Activated T-helper 1 cell treated with anti-CD3 and anti-CD28 coated beads, Interleukin-12 subunit alpha, Interleukin-12 subunit beta, Interleukin-2, Interleukin-4 antibody, amounts not matched to agents 30 ng/mL and 10 ng/mL and 1 ng/mL, durations not matched to agents 14 hours and 24 hours and 36 hours (primary cell): ENCODE measurements at regions of chr7 and their contacts with region 1.

Region 1: DNA sequence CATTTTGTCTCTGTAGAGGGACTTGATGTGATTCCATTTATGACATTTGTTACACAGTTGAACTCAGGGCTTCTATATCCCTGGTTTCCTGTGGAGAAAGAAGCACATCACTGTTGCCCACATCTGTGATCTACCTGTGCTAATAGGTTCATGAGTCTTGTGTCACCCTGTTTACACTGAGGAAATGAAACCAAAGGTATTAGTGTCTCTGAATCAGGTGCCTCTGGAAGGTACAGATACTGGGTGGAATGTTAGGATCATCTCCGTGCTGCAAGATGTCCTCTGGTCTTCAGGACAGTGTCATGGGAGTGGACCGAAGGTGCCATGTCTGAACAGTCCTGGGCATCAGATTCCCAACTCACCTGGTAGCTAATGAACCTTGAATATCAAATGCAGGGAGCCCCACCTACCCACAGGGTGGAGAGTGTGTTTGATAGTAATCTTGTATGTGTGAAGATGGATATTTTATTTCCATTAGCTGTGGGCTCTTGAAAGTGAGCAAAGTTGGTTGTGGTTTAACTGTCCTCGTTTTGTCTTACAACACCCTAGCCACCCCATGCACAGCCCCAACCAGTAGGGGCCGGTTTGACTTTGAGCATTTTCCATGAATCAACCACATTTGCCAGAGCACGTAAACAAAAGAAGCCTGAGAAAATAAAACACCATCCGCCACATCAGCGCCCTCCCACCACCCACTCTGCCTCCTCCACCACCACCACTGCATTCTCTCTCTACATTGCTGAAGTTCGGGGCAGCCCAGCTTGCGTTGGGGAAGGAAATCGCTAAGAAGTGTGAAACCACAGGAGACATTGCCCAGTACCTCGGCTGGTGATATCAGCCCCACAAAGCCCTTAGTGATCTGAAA is 40.7 kb downstream of the TARP start:
- DNase-seq: peak; percentile 78
- H3K4me3 Mint-ChIP-seq: peak overlapping the region; percentile 69
- H3K27ac Mint-ChIP-seq: peak overlapping the region; percentile 91
- H3K4me1 Mint-ChIP-seq: peaks cover 73% of the 10 kb centered on the region
- H3K27me3 Mint-ChIP-seq: peaks cover 3% of the 10 kb centered on the region

Region 2: GRCh38 chr7:38178004-38178694 is 54.6 kb before region 1 on chr7 and contains the start of gene STARD3NL:
- intact Hi-C with region 1: loop called (anchors 1 kb)
- DNase-seq: peak; percentile 90
- H3K4me3 Mint-ChIP-seq: peak within 1 kb of the TSS; percentile 94
- H3K27ac Mint-ChIP-seq: peak within 1 kb of the TSS; percentile 87
- H3K4me1 Mint-ChIP-seq: peaks cover 46% of the 10 kb centered on the region
- H3K27me3 Mint-ChIP-seq: no peaks in the 10 kb centered on the region
- total RNA-seq, gene STARD3NL: 28.5 and 31.5 TPM in 2 replicates

Region 3: GRCh38 chr7:38222481-38223096 is 10.1 kb before region 1 on chr7:
- intact Hi-C with region 1: loop called (anchors 1 kb)
- DNase-seq: peak; percentile 25
- H3K4me3 Mint-ChIP-seq: no peak overlapping the region
- H3K27ac Mint-ChIP-seq: no peak overlapping the region
- H3K4me1 Mint-ChIP-seq: peaks cover 35% of the 10 kb centered on the region
- H3K27me3 Mint-ChIP-seq: no peaks in the 10 kb centered on the region

Region 4: DNA sequence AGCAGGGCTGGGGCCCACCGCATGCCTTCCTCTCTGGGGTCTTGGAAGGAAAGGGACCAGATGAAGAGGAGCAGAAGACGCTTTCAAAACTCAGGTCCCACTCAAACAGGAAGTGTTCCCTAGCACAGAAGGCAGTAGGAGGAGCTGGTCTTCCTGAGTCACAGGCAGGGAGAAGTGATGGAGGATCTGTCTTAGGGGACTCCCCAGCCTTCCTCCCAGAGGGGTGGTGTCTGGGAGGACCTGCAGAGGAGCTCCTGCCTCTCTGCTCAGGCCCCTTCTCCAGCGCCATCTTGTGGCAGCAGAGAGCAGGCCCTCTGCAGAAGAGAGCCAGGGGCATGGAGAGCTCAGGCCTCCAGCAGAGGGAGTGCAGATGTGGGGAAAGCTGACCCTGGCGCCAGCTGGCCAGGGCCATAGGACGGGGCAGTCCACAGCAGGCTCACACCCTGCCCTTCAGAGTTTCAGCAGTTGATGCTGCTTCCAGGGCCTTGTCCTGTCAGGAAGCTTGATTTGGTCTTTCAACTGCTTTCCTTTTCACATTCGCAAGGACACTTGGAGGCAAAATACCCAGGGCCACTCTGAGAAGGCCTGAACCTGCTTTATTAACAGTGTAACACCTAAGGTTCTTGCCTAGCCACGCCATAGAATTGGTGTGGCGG is 102.9 kb after region 1 on chr7:
- intact Hi-C with region 1: loop called (anchors 1 kb)
- DNase-seq: peak; percentile 72
- H3K4me3 Mint-ChIP-seq: peak overlapping the region; percentile 64
- H3K27ac Mint-ChIP-seq: peak overlapping the region; percentile 43
- H3K4me1 Mint-ChIP-seq: peaks cover 35% of the 10 kb centered on the region
- H3K27me3 Mint-ChIP-seq: no peaks in the 10 kb centered on the region

Region 5: DNA sequence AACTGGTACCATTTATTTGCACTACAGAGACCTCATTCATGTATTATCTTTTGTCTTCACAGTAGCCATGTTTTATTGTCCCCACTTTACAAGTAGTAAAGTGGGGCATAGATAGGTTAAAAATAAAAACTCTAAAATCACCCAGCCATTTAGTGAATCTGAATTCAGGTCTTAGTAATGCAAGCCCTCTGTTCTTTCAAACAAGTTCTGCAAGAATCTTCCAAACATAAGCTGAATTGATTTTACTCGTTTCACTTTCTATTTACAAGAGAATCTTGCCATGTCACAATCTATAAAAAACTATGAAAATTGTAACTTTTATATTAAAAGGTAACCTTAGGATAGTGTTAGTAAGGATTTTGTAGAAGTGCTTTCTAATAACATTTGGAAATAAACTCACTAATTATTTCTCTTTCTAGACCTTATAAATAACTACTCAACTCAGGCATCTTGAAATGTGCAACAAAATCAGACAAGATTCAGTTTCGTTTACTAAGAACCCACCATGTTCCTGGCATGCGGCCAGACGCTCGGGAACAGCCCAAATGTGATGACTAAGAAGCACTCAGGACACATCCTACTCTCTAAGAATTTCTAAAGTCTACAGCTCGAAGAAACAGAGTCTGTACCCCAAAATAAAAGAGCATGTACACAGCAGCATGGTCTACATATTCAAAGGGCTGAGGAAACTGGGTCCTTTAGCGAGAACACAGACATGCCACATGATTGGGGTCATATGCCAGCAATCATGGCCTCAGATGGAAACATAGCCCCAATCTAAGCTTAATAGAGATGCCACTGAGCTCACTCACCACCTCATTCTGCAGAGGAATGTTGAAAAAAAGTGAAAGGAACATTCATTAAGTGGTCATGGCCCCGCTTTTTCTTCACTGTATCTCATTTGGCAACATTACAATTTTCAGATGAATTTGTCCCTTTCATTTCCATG is 230.8 kb after region 1 on chr7:
- intact Hi-C with region 1: loop called (anchors 5 kb)
- DNase-seq: peak; percentile 61
- H3K4me3 Mint-ChIP-seq: peak overlapping the region; percentile 29
- H3K27ac Mint-ChIP-seq: peak overlapping the region; percentile 61
- H3K4me1 Mint-ChIP-seq: peaks cover 20% of the 10 kb centered on the region
- H3K27me3 Mint-ChIP-seq: peaks cover 5% of the 10 kb centered on the region